ENCODE measurements at regions of chr1 and their contacts with region 1.

Region 1: GRCh38 chr1:1721201-1721600 is 3.0 kb downstream of the CDK11A start:
- DNase-seq: no peak
- ATAC-seq: no peak
- H3K4me3 ChIP-seq: no peak overlapping the region
- H3K4me3 Mint-ChIP-seq: peak overlapping the region in 2 of 10 donors; percentile 4 to 43
- H3K27ac ChIP-seq: no peak overlapping the region
- H3K27ac Mint-ChIP-seq: peak overlapping the region in 5 of 9 donors; percentile 28 to 67 (median 51)
- H3K4me1 ChIP-seq: no peaks in the 10 kb centered on the region
- H3K4me1 Mint-ChIP-seq: peaks cover under 1 to 18% (median 12%) of the 10 kb centered on the region in 7 donors
- H3K27me3 ChIP-seq: no peaks in the 10 kb centered on the region
- H3K27me3 Mint-ChIP-seq: peaks cover 0 to 4% (median 0%) of the 10 kb centered on the region in 5 donors

Region 2: DNA sequence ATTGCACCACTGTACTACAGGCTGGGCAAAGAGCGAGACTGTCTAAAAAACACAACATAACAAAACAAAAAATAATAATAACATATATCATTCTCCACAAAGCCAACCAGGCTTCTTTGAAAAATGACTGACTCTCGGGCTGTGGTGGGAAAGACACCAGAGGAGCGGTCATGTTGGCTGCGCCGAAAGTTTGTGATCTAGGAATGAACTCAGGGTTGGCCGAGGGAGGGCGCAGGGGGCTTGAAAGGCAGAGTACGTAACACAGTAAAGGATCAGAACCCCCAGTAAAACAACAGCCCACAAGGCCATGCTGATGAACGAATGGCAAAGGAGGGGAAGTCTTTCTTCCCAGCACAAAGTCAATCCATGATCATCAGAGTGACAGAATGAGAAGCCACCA is 33.4 kb before region 1 on chr1:
- CTCF ChIA-PET with region 1: no interaction called
- POLR2A ChIA-PET with region 1: interaction called, 4 read pairs
- intact Hi-C with region 1: loop called in 1 of 2 experiments (anchors 2 kb)
- DNase-seq: no peak
- ATAC-seq: no peak
- H3K4me3 ChIP-seq: no peak overlapping the region
- H3K4me3 Mint-ChIP-seq: peak overlapping the region in 5 of 10 donors; percentile 11 to 77 (median 39)
- H3K27ac ChIP-seq: peak overlapping the region; percentile 20
- H3K27ac Mint-ChIP-seq: peak overlapping the region in 4 of 9 donors; percentile 3 to 84 (median 62)
- H3K4me1 ChIP-seq: no peaks in the 10 kb centered on the region
- H3K4me1 Mint-ChIP-seq: peaks cover 2 to 64% (median 37%) of the 10 kb centered on the region in 7 donors
- H3K27me3 ChIP-seq: no peaks in the 10 kb centered on the region
- H3K27me3 Mint-ChIP-seq: no peaks in the 10 kb centered on the region

Measured in naive thymus-derived CD4-positive, alpha-beta T cell (primary cell).